ENCODE measurements at regions of chr11 and their contacts with region 1.

Region 1: GRCh38 chr11:88414981-88415391 is 77.5 kb upstream of the CTSC start:
- DNase-seq: peak; percentile 34
- H3K4me3 Mint-ChIP-seq: peak overlapping the region; percentile 12
- H3K27ac Mint-ChIP-seq: peak overlapping the region; percentile 18
- H3K4me1 Mint-ChIP-seq: peaks cover 59% of the 10 kb centered on the region
- H3K27me3 Mint-ChIP-seq: no peaks in the 10 kb centered on the region

Region 2: GRCh38 chr11:88266919-88267318 is 148.1 kb before region 1 on chr11:
- intact Hi-C with region 1: no loop called
- DNase-seq: no peak
- H3K4me3 Mint-ChIP-seq: no peak overlapping the region
- H3K27ac Mint-ChIP-seq: no peak overlapping the region
- H3K4me1 Mint-ChIP-seq: no peaks in the 10 kb centered on the region
- H3K27me3 Mint-ChIP-seq: peaks cover 3% of the 10 kb centered on the region

Region 3: GRCh38 chr11:88434336-88434976 is 19.5 kb after region 1 on chr11:
- intact Hi-C with region 1: loop called (anchors 1 kb)
- DNase-seq: no peak
- H3K4me3 Mint-ChIP-seq: no peak overlapping the region
- H3K27ac Mint-ChIP-seq: peak overlapping the region; percentile 2
- H3K4me1 Mint-ChIP-seq: peaks cover 19% of the 10 kb centered on the region
- H3K27me3 Mint-ChIP-seq: peaks cover under 1% of the 10 kb centered on the region

Measured in activated T-helper 1 cell treated with anti-CD3 and anti-CD28 coated beads, Interleukin-12 subunit alpha, Interleukin-12 subunit beta, Interleukin-2, Interleukin-4 antibody, amounts not matched to agents 30 ng/mL and 10 ng/mL and 1 ng/mL, durations not matched to agents 14 hours and 24 hours and 36 hours (primary cell).